ENCODE measurements at regions of chr17 and their contacts with region 1.

Region 1: GRCh38 chr17:2309338-2310154 is 5.8 kb downstream of the SRR start:
- DNase-seq: no peak

Region 2: GRCh38 chr17:1294157-1294717 is 1015.3 kb before region 1 on chr17:
- intact Hi-C with region 1: loop called in 1 of 2 experiments (anchors 5 kb)
- DNase-seq: no peak

Region 3: GRCh38 chr17:2484876-2485275 is 175.3 kb after region 1 on chr17:
- intact Hi-C with region 1: no loop called
- DNase-seq: no peak